Activated naive CD4-positive, alpha-beta T cell treated with anti-CD3 and anti-CD28 coated beads for 36 hours (primary cell): ENCODE measurements at regions of chr17 and their contacts with region 1.

Region 1: GRCh38 chr17:75034236-75034908 is 12.4 kb downstream of the ATP5PD start:
- DNase-seq: peak; percentile 96
- H3K4me3 Mint-ChIP-seq: peak overlapping the region; percentile 95
- H3K27ac Mint-ChIP-seq: peak overlapping the region; percentile 93
- H3K4me1 Mint-ChIP-seq: peaks cover 46% of the 10 kb centered on the region
- H3K27me3 Mint-ChIP-seq: peaks cover 3% of the 10 kb centered on the region

Region 2: GRCh38 chr17:74972973-74973328 is 61.4 kb before region 1 on chr17:
- CTCF ChIA-PET with region 1: no interaction called
- intact Hi-C with region 1: no loop called
- DNase-seq: no peak
- H3K4me3 Mint-ChIP-seq: peak overlapping the region; percentile 72
- H3K27ac Mint-ChIP-seq: no peak overlapping the region
- H3K4me1 Mint-ChIP-seq: peaks cover 9% of the 10 kb centered on the region
- H3K27me3 Mint-ChIP-seq: peaks cover 6% of the 10 kb centered on the region

Region 3: DNA sequence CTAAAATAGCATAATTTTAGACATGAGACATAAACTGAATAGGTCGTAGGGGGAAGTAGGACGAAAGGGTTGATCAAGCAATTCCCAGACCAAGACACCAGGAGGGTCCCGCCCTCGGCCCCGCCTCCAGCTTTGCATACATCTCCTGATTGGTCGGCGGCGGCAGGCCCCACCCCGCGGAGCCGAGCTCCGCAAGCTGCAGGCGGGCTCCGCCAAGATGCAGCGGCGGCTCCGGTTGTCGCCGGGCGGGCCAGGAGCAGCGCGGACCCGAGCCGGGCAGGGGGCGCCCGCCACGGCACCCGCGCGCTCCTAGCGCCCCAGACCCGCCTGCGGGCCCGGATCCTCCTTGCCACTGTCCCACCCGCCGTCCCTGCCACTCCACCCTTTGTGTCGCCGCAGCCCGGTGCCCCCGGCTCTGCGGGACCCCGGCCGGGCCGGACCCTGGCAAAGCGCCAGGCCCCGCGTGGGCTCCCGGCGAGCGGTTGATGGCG is 46.9 kb before region 1 on chr17 and contains the start of gene CDR2L:
- CTCF ChIA-PET with region 1: interaction called, 4 read pairs
- intact Hi-C with region 1: loop called (anchors 1 kb)
- DNase-seq: peak; percentile 94
- H3K4me3 Mint-ChIP-seq: peak within 1 kb of the TSS; percentile 80
- H3K27ac Mint-ChIP-seq: no peak within 1 kb of the TSS
- H3K4me1 Mint-ChIP-seq: peaks cover 8% of the 10 kb centered on the region
- H3K27me3 Mint-ChIP-seq: peaks cover 9% of the 10 kb centered on the region
- total RNA-seq, gene CDR2L: 0.49 to 0.93 TPM

Region 4: DNA sequence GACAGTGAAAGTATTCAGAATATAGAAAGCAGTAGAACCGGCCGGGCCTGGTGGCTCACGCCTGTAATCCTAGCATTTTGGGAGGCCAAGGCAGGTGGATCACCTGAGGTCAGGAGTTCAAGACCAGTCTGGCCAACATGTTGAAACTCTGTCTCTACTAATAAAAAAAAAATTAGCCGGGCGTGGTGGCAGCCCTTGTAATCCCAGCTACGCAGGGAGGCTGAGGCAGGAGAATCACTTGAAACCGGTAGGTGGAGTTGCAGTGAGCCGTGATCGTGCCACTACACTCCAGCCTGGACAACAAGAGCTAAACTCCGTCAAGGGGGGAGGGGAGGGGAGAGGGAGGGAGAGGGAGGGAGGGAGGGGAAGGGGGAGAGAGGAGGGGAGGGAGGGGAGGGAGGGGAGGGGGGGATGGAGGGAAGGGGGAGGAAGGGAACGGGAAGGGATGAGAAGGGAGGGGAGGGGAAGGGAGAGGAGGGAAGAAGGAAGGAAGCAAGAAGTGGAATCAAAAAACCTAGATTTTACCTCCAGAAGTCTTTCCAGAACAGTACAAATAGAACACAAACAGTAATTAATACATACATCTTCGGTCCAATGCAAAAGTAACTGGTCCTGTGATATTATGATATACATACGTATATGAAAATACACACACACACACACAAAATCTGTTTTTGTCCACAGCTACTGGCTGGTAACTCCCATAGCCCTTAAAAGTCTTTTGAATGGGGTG is 108.0 kb after region 1 on chr17:
- CTCF ChIA-PET with region 1: no interaction called
- intact Hi-C with region 1: no loop called
- DNase-seq: no peak
- H3K4me3 Mint-ChIP-seq: no peak overlapping the region
- H3K27ac Mint-ChIP-seq: no peak overlapping the region
- H3K4me1 Mint-ChIP-seq: peaks cover 15% of the 10 kb centered on the region
- H3K27me3 Mint-ChIP-seq: no peaks in the 10 kb centered on the region